HepG2 (cell line): ENCODE measurements at regions of chr4 and their contacts with region 1.

Region 1: DNA sequence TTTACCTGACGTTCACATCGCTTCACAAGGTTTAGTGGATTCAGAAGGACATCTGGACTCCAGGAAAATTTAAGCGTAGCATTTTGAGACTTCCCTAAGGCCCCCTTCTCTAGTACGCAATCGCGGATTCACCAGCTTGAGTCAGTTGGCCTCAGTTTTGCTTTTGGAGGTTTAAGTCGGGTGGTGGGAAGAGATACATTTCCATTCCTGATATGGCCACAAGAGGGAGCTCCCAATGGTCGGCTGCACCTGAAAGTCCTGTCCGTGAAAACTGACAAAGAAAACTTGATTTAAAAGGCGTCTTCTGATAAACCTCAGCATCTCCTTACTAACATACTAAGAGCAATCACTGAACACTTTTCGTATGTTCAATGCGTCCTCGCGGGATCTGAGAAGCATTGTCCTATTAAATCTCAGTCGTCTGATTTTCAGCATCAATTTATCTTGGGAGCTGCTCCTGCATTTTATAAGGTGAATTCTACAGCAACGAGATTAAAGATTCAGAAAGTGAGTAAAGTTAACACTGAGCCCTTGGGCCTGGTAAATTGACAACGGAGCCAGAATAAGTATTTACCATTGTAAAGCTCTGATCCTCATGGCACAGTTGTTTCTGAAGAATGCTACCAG is 50.6 kb downstream of the LGI2 start:
- DNase-seq: peak; percentile 33
- ATAC-seq: peak; percentile 70
- H3K4me3 ChIP-seq: no peak overlapping the region
- H3K27ac ChIP-seq: no peak overlapping the region
- H3K4me1 ChIP-seq: no peaks in the 10 kb centered on the region
- H3K27me3 ChIP-seq: peaks cover 0 to 19% of the 10 kb centered on the region in 2 experiments; a peak in 1 of 5 replicates
- CTCF ChIP-seq: peak; percentile 72
- EP300 ChIP-seq: no peak
- POLR2A ChIP-seq: no peak
- RAD21 ChIP-seq: peak; percentile 23; the same call in 1 of the 2 replicates

Region 2: GRCh38 chr4:24488399-24489164 is 491.6 kb before region 1 on chr4:
- CTCF ChIA-PET with region 1: no interaction called
- POLR2A ChIA-PET with region 1: no interaction called
- in situ Hi-C with region 1: loop called (anchors 25 kb)
- intact Hi-C with region 1: loop called (anchors 10 kb)
- DNase-seq: peak; percentile 44
- ATAC-seq: peak; percentile 99
- H3K4me3 ChIP-seq: no peak overlapping the region
- H3K27ac ChIP-seq: no peak overlapping the region
- H3K4me1 ChIP-seq: 0 out of 2 replicates have a peak, but pooled peaks cover 6% of the 10 kb centered on the region
- H3K27me3 ChIP-seq: 0 out of 5 replicates have a peak, but pooled peaks cover 0 to 6% of the 10 kb centered on the region in 2 experiments
- CTCF ChIP-seq: peak; percentile 89
- EP300 ChIP-seq: no peak
- POLR2A ChIP-seq: no peak
- RAD21 ChIP-seq: peak; percentile 73

Region 3: GRCh38 chr4:24912252-24913118 is 67.7 kb before region 1 on chr4 and contains the start of gene CCDC149:
- CTCF ChIA-PET with region 1: no interaction called
- POLR2A ChIA-PET with region 1: no interaction called
- in situ Hi-C with region 1: no loop called
- intact Hi-C with region 1: no loop called
- DNase-seq: peak; percentile 13
- ATAC-seq: peak; percentile 95
- H3K4me3 ChIP-seq: peak within 1 kb of the TSS; percentile 21 to 58 (median 41); a peak in 5 of 6 replicates
- H3K27ac ChIP-seq: no peak within 1 kb of the TSS
- H3K4me1 ChIP-seq: no peaks in the 10 kb centered on the region; the same call in 1 of the 2 replicates
- H3K27me3 ChIP-seq: peaks cover 0 to 12% of the 10 kb centered on the region in 2 experiments; a peak in 3 of 5 replicates
- CTCF ChIP-seq: no peak
- EP300 ChIP-seq: no peak
- POLR2A ChIP-seq: no peak
- RAD21 ChIP-seq: no peak
- total RNA-seq, gene CCDC149: 0.21 and 0.44 TPM in 2 replicates

Region 4: DNA sequence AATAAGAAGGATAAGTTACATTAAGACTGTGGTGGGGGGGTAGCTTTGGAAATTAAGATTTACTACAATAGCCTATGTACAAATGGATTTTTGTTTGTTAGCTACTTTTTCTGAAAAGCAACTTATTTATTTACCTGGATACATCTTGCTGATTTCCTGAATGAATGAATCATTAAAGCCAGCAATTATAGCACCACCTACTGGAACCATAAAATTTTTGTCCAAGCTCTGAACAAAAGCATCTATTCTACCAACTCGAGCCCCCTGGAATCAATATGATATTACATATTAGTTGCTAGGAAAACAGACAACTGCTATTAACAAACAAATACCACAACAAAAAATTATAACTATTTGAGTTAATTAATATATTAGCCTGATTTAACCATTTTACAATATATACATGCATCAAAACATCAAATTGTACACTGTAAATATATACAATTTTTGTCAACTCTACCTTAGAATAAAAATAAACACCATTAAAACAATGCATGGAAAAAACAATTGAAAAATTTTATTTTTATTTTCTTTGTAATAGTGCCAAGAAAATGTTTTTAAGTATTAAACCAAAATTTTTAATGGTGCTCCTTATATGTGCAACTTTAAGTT is 164.8 kb after region 1 on chr4:
- CTCF ChIA-PET with region 1: interaction called, 3 read pairs
- POLR2A ChIA-PET with region 1: no interaction called
- in situ Hi-C with region 1: no loop called
- intact Hi-C with region 1: loop called (anchors 1 kb)
- DNase-seq: no peak
- ATAC-seq: no peak
- H3K4me3 ChIP-seq: no peak overlapping the region
- H3K27ac ChIP-seq: no peak overlapping the region
- H3K4me1 ChIP-seq: no peaks in the 10 kb centered on the region
- H3K27me3 ChIP-seq: no peaks in the 10 kb centered on the region
- CTCF ChIP-seq: peak; percentile 45
- EP300 ChIP-seq: no peak
- POLR2A ChIP-seq: no peak
- RAD21 ChIP-seq: no peak

Region 5: DNA sequence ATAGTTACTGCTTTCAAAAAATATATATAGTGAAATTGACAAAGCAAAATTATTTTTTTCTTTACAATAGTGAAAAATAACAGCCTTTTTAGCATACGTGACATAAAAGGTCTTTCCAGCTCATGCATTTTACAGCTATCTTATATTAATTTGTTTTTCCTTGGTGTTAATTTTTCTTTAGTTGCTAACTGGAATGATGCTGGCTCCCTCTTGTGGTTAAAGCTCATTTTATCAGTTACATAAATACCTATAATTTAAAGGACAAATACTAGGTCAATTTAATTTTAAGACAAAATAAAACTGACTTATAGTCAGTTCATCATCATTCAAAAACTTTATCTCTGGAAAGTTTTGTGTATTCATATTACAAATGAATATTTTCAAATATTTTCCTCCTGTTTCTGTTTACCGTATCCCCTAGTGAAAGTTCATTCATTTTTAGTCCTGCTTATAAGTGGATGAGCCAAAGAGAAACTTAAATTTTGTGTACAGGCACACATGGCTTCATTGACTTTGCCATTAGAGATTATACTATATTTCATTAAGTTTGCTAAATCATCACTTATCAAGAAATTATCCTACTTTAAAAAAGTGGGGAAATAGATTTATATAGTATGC is 386.9 kb after region 1 on chr4:
- CTCF ChIA-PET with region 1: no interaction called
- POLR2A ChIA-PET with region 1: no interaction called
- in situ Hi-C with region 1: loop called (anchors 25 kb)
- intact Hi-C with region 1: loop called (anchors 1 kb)
- DNase-seq: no peak
- ATAC-seq: no peak
- H3K4me3 ChIP-seq: no peak overlapping the region
- H3K27ac ChIP-seq: no peak overlapping the region
- H3K4me1 ChIP-seq: peaks cover 24% of the 10 kb centered on the region
- H3K27me3 ChIP-seq: no peaks in the 10 kb centered on the region
- CTCF ChIP-seq: peak; percentile 42
- EP300 ChIP-seq: no peak
- POLR2A ChIP-seq: no peak
- RAD21 ChIP-seq: no peak